CD14-positive monocyte (primary cell): ENCODE measurements at regions of chr19 and their contacts with region 1.

Region 1: DNA sequence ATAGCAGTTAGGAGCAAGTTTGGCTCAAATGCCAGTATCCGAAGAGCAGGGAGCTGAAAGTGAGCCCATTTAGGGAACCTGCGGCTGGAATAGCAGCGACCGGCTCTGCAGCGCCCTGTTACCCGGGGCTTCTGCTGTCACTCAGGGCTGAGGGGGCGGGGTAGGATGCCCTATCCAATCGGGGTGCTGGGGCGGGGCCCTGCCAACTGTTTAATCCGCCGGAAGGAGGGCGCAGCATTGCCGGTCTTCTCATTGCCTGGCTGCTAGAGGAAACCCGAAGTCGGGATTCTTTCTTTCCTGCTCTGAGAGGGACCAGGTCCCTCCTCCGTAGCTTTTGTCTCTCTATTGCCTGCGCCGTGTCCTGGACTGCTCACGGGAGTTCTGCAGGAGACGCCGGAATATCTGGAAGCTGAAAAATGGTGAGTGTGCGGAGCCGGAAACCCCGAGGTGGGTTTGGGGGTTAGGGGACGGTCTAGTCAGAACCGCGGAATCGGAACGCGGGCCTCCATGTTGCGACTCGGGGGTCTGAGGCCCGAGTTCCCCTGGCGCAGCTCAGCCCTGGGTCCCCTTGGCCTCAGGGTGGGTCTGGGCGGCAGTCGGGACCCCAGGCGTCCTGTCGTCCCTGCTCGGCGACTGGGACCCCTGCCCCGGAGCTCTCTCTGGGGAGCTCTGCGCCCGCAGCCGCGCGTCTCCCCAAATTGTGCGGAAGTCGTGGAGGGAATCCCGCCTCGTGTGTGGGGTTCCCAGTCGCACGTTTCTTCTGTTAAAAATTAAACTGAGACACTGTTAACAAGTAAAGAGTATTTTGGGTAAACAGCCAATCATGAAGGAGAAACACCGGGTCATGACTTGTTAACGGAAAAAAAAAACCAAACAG is 22.8 kb downstream of the ZNF763 start:
- DNase-seq: peak; percentile 90 to 96 (median 94)
- H3K4me3 ChIP-seq: peak overlapping the region; percentile 58 to 99 (median 83)
- H3K4me3 Mint-ChIP-seq: peak overlapping the region; percentile 97 to 99
- H3K27ac ChIP-seq: peak overlapping the region; percentile 81 to 92
- H3K27ac Mint-ChIP-seq: peak overlapping the region; percentile 91 to 98 (median 95)
- H3K4me1 ChIP-seq: peaks cover 9 to 13% of the 10 kb centered on the region in 2 donors
- H3K4me1 Mint-ChIP-seq: peaks cover 15% of the 10 kb centered on the region
- H3K27me3 ChIP-seq: no peaks in the 10 kb centered on the region
- H3K27me3 Mint-ChIP-seq: peaks cover 0 to 8% (median 2%) of the 10 kb centered on the region in 3 donors
- CTCF ChIP-seq: no peak

Region 2: DNA sequence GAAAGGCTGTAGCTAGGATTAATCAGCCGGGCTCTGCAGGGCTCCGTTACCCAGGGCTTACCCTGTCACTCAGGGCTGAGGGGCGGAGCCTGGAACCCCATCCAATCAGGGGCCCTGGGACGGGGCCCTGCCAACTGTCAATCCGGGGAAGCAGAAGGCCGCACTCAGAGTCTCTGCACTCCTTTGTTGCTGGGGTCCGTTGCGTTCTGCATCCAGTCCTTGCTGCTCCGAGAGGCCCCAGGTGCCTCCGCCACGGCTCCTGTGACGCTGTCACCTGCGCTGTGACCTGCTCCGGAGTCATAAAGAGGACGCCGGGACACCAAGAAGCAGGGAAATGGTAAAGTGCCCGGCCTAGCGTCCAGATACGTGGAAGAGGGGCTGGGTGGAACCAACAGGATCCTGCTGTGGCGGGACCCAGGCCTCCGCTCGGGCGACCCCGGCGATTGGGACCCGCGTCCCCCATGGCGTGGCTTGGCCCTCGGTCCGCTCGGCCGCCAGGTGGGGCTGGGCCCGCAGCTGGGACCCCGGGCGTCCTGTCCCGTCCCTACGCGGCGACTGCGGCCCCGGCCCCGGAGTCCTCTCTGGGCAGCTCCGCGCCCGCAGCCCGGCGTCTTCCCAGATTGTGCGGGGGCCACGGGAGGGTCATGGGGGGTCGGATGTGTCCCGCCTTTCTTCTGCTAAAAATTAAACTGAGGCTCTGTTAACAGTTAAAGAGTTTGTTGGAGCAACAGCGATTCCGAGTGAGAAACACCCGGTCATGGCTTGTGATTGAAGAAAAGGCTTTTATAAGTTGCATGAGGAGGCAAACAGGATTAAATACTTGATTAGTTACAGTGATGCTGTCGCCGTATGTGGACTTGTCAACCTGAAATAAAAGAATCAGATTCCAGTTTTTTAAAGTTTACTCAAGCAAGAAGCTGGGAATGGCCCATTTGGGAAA is 189.0 kb before region 1 on chr19 and contains the start of gene ZNF491:
- intact Hi-C with region 1: loop called in 1 of 2 experiments (anchors 5 kb)
- DNase-seq: peak; percentile 71 to 83 (median 75)
- H3K4me3 ChIP-seq: peak within 1 kb of the TSS; percentile 68 to 86 (median 71)
- H3K4me3 Mint-ChIP-seq: peak within 1 kb of the TSS; percentile 92 to 96
- H3K27ac ChIP-seq: peak within 1 kb of the TSS; percentile 23 to 72
- H3K27ac Mint-ChIP-seq: peak within 1 kb of the TSS; percentile 31 to 88 (median 81)
- H3K4me1 ChIP-seq: peaks cover 16 to 22% of the 10 kb centered on the region in 2 donors
- H3K4me1 Mint-ChIP-seq: peaks cover 22% of the 10 kb centered on the region
- H3K27me3 ChIP-seq: no peaks in the 10 kb centered on the region
- H3K27me3 Mint-ChIP-seq: peaks cover 1 to 10% (median 4%) of the 10 kb centered on the region in 3 donors
- CTCF ChIP-seq: no peak
- polyA plus RNA-seq, gene ZNF491: 0.27 to 0.92 TPM in 2 of 3 donors, not detected in the other

Region 3: GRCh38 chr19:11814029-11814699 is 173.5 kb before region 1 on chr19 and contains the start of gene ZNF440:
- intact Hi-C with region 1: loop called (anchors 5 to 10 kb)
- DNase-seq: peak; percentile 80 to 89 (median 80)
- H3K4me3 ChIP-seq: peak within 1 kb of the TSS; percentile 71 to 92 (median 84)
- H3K4me3 Mint-ChIP-seq: peak within 1 kb of the TSS; percentile 93 to 95
- H3K27ac ChIP-seq: peak within 1 kb of the TSS; percentile 72 to 80
- H3K27ac Mint-ChIP-seq: peak within 1 kb of the TSS; percentile 81 to 96 (median 89)
- H3K4me1 ChIP-seq: peaks cover 9 to 15% of the 10 kb centered on the region in 2 donors
- H3K4me1 Mint-ChIP-seq: peaks cover 20% of the 10 kb centered on the region
- H3K27me3 ChIP-seq: no peaks in the 10 kb centered on the region
- H3K27me3 Mint-ChIP-seq: peaks cover 0 to 2% (median 0%) of the 10 kb centered on the region in 3 donors
- CTCF ChIP-seq: no peak
- polyA plus RNA-seq, gene ZNF440: 2.4 to 4.1 (median 3.4) TPM

Region 4: DNA sequence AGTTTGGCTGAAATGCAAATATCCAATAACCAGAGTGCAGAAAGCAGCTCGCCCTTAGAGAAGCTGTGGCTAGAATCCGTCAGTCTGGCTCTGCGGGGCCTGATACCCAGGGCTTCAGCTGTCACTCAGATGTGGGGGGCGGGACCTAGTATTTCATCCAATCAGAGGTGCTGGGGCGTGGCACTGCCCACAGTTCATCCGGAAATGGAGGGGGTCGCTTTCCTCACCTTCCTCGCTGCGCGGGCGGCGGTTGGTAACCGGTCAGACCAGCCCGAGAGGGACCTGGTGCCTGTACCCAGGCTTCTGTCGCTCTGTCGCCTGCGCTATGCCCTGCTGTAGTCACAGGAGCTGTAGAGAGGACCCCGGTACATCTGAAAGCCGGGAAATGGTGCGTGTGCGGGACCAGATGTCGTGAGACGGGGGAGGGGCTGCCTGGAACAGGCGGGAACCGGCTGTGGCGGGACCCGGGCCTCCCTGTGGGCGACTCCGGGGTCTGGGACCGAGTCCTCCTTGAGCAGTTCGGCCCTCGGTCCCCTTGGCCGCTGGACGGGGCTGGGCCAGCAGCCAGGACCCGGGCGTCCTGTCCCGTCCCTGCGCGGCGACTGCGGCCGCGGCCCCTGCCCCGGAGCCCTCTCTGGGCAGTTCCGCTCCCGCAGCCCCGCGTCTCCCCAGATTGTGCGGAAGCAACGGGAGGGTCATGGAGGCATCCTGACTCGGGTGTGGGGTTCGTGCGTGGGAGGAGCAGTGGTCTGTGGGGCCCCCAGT is 62.6 kb before region 1 on chr19 and contains the start of gene ZNF700:
- intact Hi-C with region 1: loop called (anchors 2 to 5 kb)
- DNase-seq: peak; percentile 81 to 86 (median 81)
- H3K4me3 ChIP-seq: peak within 1 kb of the TSS; percentile 83 to 97 (median 91)
- H3K4me3 Mint-ChIP-seq: peak within 1 kb of the TSS; percentile 95 to 96
- H3K27ac ChIP-seq: peak within 1 kb of the TSS; percentile 93 to 95
- H3K27ac Mint-ChIP-seq: peak within 1 kb of the TSS; percentile 91 to 99 (median 97)
- H3K4me1 ChIP-seq: peaks cover 26 to 37% of the 10 kb centered on the region in 2 donors
- H3K4me1 Mint-ChIP-seq: peaks cover 30% of the 10 kb centered on the region
- H3K27me3 ChIP-seq: no peaks in the 10 kb centered on the region
- H3K27me3 Mint-ChIP-seq: no peaks in the 10 kb centered on the region
- CTCF ChIP-seq: no peak
- polyA plus RNA-seq, gene ZNF700: 1.1 to 18.3 (median 1.2) TPM

Region 5: DNA sequence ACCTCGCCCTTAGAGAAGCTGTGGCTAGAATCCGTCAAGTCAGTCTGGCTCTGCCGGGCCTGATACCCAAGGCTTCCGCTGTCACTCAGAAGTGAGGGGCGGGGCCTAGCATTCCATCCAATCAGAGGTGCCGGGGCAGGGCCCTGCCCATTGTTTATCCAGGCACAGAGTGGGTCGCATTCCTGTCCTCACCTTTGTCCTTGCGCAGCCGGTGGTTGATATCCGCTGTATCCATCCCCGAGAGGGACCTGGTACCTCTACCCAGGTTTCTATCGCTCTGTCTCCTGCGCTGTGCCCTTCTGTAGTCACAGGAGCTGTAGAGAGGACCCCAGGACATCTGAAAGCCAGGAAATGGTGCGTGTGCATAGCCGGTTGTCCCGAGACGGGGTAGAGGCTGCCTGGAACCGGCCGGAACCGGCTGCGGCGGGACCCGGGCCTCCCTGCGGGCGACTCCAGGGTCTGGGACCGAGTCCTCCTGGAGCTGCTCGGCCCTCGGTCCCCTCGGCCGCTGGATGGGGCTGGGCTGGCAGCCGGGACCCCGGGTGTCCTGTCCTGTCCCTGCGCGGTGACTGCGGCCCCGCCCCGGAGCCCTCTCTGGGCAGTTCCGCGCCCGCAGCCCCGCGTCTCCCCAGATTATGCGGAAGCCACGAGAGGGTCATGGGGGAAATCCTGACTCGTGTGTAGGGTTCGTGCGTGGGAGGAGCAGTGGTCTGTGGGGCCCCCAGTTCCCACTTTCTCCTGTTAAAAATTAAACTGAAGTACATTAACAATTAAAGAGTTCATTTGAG is 22.6 kb before region 1 on chr19 and contains the start of gene ZNF763:
- intact Hi-C with region 1: loop called (anchors 1 to 2 kb)
- DNase-seq: peak; percentile 87 to 95 (median 93)
- H3K4me3 ChIP-seq: peak within 1 kb of the TSS; percentile 68 to 99 (median 96)
- H3K4me3 Mint-ChIP-seq: peak within 1 kb of the TSS; percentile 94 to 99
- H3K27ac ChIP-seq: peak within 1 kb of the TSS; percentile 86 to 99
- H3K27ac Mint-ChIP-seq: peak within 1 kb of the TSS; percentile 93 to 99 (median 97)
- H3K4me1 ChIP-seq: peaks cover 18 to 21% of the 10 kb centered on the region in 2 donors
- H3K4me1 Mint-ChIP-seq: peaks cover 25% of the 10 kb centered on the region
- H3K27me3 ChIP-seq: no peaks in the 10 kb centered on the region
- H3K27me3 Mint-ChIP-seq: peaks cover 0 to 6% (median 2%) of the 10 kb centered on the region in 3 donors
- CTCF ChIP-seq: no peak
- polyA plus RNA-seq, gene ZNF763: 1.3 to 2.6 (median 1.7) TPM